ENCODE measurements at regions of chr13 and their contacts with region 1.

Region 1: GRCh38 chr13:97855570-97856303 is 97.7 kb upstream of the IPO5 start:
- DNase-seq: peak; percentile 13
- H3K4me3 ChIP-seq: no peak overlapping the region
- H3K27ac ChIP-seq: peak overlapping the region in 1 of 4 donors; percentile 13
- H3K4me1 ChIP-seq: peaks cover 0 to 5% (median 0%) of the 10 kb centered on the region in 4 donors
- H3K27me3 ChIP-seq: no peaks in the 10 kb centered on the region
- CTCF ChIP-seq: peak; percentile 74 to 83 (median 74)
- EP300 ChIP-seq: no peak
- POLR2A ChIP-seq: no peak

Region 2: DNA sequence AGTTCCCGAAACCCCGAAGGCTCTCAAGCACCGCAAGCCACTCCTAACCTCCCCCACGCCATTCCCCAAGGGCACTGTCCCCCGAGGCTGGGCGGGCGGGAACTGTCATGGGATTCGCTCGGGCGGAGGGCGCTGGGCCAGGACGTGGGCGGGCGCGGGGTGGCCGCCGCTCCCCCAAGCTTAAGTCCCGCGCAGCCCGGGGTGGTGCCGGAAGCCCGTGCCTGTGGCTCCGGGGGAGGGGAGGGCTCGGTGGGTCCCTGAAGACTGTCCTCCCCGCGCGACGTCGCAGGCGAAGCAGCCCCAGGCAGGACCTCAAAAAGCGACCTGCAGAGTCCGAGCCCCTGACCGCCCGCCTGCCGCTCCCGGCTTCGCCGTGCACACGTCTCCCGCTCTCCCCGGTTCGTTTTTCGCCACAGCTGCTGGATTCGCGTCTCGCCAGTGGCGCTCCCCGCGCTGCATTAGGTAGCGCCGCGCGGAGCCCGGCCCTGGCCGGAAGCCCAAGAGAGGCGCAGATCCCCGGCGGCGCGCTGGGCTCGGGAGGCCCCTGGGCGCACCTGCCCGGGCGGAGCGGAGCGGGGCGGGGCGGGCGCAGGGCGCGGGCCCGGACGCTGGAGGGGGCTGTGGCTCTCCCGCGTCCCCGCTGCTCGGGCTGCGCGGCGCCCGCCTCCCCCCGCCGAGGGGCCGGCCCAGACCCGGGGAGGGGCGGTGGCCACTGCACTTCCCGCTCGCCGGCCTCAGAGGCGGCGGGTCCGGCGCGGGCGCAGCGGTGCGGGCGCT is 286.8 kb after region 1 on chr13 and contains the start of gene FARP1:
- in situ Hi-C with region 1: loop called in 1 of 4 experiments (anchors 25 kb)
- intact Hi-C with region 1: no loop called
- DNase-seq: peak; percentile 84
- H3K4me3 ChIP-seq: peak within 1 kb of the TSS; percentile 78 to 96 (median 90)
- H3K27ac ChIP-seq: peak within 1 kb of the TSS; percentile 81 to 90 (median 84)
- H3K4me1 ChIP-seq: peaks cover 16 to 23% (median 19%) of the 10 kb centered on the region in 4 donors
- H3K27me3 ChIP-seq: peaks cover 5% of the 10 kb centered on the region
- CTCF ChIP-seq: peak in 2 of 5 experiments; percentile 30 to 38
- EP300 ChIP-seq: no peak
- POLR2A ChIP-seq: peak; percentile 32
- total RNA-seq, gene FARP1: 32.8 to 41.8 (median 38.3) TPM

Region 3: GRCh38 chr13:98405107-98405571 is 549.4 kb after region 1 on chr13:
- in situ Hi-C with region 1: loop called in 3 of 4 experiments (anchors 10 to 25 kb)
- intact Hi-C with region 1: no loop called
- DNase-seq: no peak
- H3K4me3 ChIP-seq: no peak overlapping the region
- H3K27ac ChIP-seq: no peak overlapping the region
- H3K4me1 ChIP-seq: peaks cover 0 to 17% (median 10%) of the 10 kb centered on the region in 4 donors
- H3K27me3 ChIP-seq: no peaks in the 10 kb centered on the region
- CTCF ChIP-seq: no peak
- EP300 ChIP-seq: no peak
- POLR2A ChIP-seq: no peak

Region 4: GRCh38 chr13:98411681-98412201 is 556.0 kb after region 1 on chr13:
- in situ Hi-C with region 1: loop called in 3 of 4 experiments (anchors 10 to 25 kb)
- intact Hi-C with region 1: no loop called
- DNase-seq: peak; percentile 20
- H3K4me3 ChIP-seq: no peak overlapping the region
- H3K27ac ChIP-seq: no peak overlapping the region
- H3K4me1 ChIP-seq: peaks cover 2 to 9% (median 9%) of the 10 kb centered on the region in 4 donors
- H3K27me3 ChIP-seq: no peaks in the 10 kb centered on the region
- CTCF ChIP-seq: no peak
- EP300 ChIP-seq: no peak
- POLR2A ChIP-seq: no peak

Region 5: DNA sequence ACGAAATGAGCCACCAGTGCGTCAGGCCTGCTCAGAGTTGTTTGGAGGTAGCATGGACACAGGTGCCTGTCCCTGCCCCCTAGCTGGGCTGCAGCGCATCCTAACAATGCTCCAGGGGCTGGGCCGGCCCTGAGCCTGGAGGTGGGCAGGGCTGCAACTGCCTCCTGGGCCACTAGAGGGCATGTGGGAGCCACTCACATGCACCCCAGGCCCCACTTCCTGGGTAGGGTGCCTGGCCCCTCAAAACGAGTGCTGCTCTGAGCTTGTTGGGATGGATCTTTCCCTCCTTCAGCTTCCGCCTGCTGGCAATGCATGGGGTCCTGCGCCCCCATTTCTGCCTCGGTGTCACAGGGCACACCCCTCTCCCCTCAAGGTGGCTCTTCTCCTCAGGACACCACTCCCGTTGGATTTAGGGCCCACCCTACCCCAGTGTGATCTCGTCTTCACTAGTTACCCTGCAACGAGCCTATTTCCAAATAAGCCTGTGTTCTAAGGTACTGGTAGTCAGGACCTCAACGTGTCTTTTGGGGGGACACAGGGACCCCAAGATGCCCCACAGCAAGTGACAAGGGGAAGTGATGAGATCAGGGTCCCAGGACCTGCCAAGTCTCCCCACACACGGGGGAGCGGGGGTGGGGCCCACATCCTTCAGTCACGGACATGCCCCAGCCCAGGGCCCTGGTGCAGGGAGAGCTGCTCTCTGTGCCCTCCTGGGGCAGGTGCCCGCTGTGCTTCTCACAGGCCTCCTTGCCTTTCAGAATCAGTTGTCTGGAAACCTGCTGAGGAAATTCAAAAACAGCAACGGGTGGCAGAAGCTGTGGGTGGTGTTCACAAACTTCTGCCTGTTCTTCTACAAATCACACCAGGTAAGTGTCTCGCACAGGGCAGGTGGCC is 589.9 kb after region 1 on chr13:
- in situ Hi-C with region 1: loop called in 1 of 4 experiments (anchors 25 kb)
- intact Hi-C with region 1: no loop called
- DNase-seq: peak; percentile 80
- H3K4me3 ChIP-seq: no peak overlapping the region
- H3K27ac ChIP-seq: peak overlapping the region; percentile 3 to 66 (median 16)
- H3K4me1 ChIP-seq: peaks cover 6 to 19% (median 13%) of the 10 kb centered on the region in 4 donors
- H3K27me3 ChIP-seq: no peaks in the 10 kb centered on the region
- CTCF ChIP-seq: peak; percentile 94 to 98 (median 97)
- EP300 ChIP-seq: no peak
- POLR2A ChIP-seq: no peak

Region 6: DNA sequence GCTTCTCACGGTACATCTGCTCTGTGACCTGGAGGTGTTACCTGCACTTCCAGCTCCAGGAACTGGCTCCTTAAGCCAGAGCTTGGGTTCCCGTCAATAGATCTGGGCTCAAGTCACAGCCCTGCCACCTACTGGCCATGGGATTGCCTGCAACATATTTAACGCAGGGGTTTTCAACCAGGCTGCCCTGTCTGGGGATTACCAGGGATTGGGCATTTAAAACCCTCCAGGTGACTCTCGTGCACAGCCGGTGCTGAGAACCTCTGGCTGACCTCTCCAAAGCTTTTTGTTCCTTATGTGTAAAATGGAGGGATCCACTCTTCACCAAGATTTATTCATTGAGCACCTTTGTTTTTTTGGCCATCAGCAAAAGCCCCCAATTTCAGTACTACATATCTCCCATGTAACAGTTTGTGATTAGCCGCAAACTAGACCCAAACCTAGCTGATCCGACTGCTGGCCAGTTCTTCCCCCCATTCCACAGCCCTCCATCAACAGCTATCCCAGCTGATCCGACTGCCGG is 797.8 kb after region 1 on chr13:
- in situ Hi-C with region 1: loop called in 1 of 4 experiments (anchors 25 kb)
- intact Hi-C with region 1: no loop called
- DNase-seq: peak; percentile 88
- H3K4me3 ChIP-seq: no peak overlapping the region
- H3K27ac ChIP-seq: peak overlapping the region in 1 of 4 donors; percentile 23
- H3K4me1 ChIP-seq: peaks cover 11 to 39% (median 27%) of the 10 kb centered on the region in 4 donors
- H3K27me3 ChIP-seq: no peaks in the 10 kb centered on the region
- CTCF ChIP-seq: peak; percentile 87 to 95 (median 94)
- EP300 ChIP-seq: no peak
- POLR2A ChIP-seq: no peak

Region 7: DNA sequence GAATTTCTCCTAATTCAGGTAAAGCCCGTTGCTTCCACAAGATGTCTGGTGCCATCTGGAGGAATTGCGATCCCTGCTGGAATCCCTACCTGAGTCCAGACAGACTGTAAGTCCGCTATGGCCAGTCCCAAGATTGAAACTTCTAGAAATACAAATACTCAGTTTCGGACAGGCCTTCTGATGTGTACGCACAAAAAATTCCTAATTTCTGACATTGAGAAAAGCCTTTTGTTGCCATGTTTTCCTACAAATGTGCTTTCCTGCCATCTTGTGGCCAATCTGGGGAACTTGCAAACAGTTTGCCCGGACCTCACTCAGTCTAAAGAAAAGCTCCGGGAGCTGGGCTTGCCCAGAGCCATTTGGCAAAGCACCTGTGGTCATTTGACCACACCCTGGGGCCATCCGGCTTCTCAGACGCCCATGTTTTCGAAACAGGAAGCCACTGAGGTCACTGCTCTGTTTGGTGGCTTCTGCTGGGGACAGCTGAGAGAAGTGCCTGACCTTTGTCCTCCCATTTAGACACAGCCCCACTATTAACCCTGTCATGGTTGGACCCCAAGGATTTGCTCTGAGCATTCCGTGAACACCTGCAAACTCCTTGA is 817.3 kb after region 1 on chr13:
- in situ Hi-C with region 1: loop called in 3 of 4 experiments (anchors 25 kb)
- intact Hi-C with region 1: loop called (anchors 10 kb)
- DNase-seq: peak; percentile 82
- H3K4me3 ChIP-seq: peak overlapping the region in 1 of 4 donors; percentile 2
- H3K27ac ChIP-seq: no peak overlapping the region
- H3K4me1 ChIP-seq: peaks cover 0 to 15% (median 7%) of the 10 kb centered on the region in 4 donors
- H3K27me3 ChIP-seq: no peaks in the 10 kb centered on the region
- CTCF ChIP-seq: peak; percentile 83 to 91 (median 84)
- EP300 ChIP-seq: no peak
- POLR2A ChIP-seq: no peak

Measured in transverse colon (tissue), 4 donors.